Activated CD4-positive, alpha-beta T cell treated with anti-CD3 and anti-CD28 coated beads, Interleukin-2, amount 10 ng/mL, durations not matched to agents 24 days and 14 days (primary cell): ENCODE measurements at regions of chr10 and their contacts with region 1.

Region 1: GRCh38 chr10:110414563-110415309 is 83.0 kb upstream of the DUSP5 start:
- DNase-seq: peak; percentile 95
- H3K4me3 Mint-ChIP-seq: peak overlapping the region; percentile 39
- H3K27ac Mint-ChIP-seq: peak overlapping the region; percentile 94
- H3K4me1 Mint-ChIP-seq: peaks cover 62% of the 10 kb centered on the region
- H3K27me3 Mint-ChIP-seq: no peaks in the 10 kb centered on the region

Region 2: GRCh38 chr10:110101464-110102144 is 313.1 kb before region 1 on chr10:
- intact Hi-C with region 1: no loop called
- DNase-seq: no peak
- H3K4me3 Mint-ChIP-seq: peak overlapping the region; percentile 44
- H3K27ac Mint-ChIP-seq: peak overlapping the region; percentile 88
- H3K4me1 Mint-ChIP-seq: peaks cover 31% of the 10 kb centered on the region
- H3K27me3 Mint-ChIP-seq: no peaks in the 10 kb centered on the region

Region 3: GRCh38 chr10:110387983-110388687 is 26.6 kb before region 1 on chr10:
- intact Hi-C with region 1: loop called (anchors 2 kb)
- DNase-seq: peak; percentile 71
- H3K4me3 Mint-ChIP-seq: peak overlapping the region; percentile 39
- H3K27ac Mint-ChIP-seq: peak overlapping the region; percentile 93
- H3K4me1 Mint-ChIP-seq: peaks cover 45% of the 10 kb centered on the region
- H3K27me3 Mint-ChIP-seq: no peaks in the 10 kb centered on the region

Region 4: DNA sequence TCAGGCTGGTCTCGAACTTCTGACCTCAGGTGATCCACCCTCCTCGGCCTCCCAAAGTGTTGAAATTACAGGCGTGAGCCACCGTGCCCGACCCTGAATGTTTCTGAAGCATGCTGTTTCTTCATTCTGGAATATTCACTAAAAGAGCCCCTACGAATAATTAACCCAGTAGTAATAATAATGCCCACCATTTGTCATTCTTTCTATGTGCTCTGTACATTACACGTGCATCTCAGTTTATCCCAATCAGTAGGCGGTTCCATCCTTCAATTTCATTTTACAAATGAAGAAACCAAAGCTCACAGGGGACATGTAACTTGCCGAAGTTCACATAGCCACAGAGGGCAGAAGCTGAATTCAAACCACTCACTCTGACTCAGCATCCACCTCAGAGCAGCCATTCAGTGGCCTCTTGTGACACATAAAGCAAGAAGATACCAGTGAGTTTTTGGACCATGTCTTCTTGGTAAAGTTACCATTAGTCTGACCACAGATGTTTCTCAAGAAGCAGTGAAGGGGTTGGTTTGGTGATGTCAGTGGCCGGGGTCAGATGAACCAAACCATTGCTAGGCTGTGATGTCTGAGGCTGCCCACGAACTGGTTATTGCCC is 11.1 kb after region 1 on chr10:
- intact Hi-C with region 1: loop called (anchors 1 kb)
- DNase-seq: peak; percentile 82
- H3K4me3 Mint-ChIP-seq: peak overlapping the region; percentile 51
- H3K27ac Mint-ChIP-seq: peak overlapping the region; percentile 92
- H3K4me1 Mint-ChIP-seq: peaks cover 55% of the 10 kb centered on the region
- H3K27me3 Mint-ChIP-seq: no peaks in the 10 kb centered on the region

Region 5: GRCh38 chr10:110502851-110503301 is 88.1 kb after region 1 on chr10:
- intact Hi-C with region 1: loop called (anchors 1 kb)
- DNase-seq: peak; percentile 84
- H3K4me3 Mint-ChIP-seq: peak overlapping the region; percentile 99
- H3K27ac Mint-ChIP-seq: peak overlapping the region; percentile 92
- H3K4me1 Mint-ChIP-seq: peaks cover 78% of the 10 kb centered on the region
- H3K27me3 Mint-ChIP-seq: no peaks in the 10 kb centered on the region